CD8-positive, alpha-beta T cell (primary cell): ENCODE measurements at regions of chr16 and their contacts with region 1.

Region 1: DNA sequence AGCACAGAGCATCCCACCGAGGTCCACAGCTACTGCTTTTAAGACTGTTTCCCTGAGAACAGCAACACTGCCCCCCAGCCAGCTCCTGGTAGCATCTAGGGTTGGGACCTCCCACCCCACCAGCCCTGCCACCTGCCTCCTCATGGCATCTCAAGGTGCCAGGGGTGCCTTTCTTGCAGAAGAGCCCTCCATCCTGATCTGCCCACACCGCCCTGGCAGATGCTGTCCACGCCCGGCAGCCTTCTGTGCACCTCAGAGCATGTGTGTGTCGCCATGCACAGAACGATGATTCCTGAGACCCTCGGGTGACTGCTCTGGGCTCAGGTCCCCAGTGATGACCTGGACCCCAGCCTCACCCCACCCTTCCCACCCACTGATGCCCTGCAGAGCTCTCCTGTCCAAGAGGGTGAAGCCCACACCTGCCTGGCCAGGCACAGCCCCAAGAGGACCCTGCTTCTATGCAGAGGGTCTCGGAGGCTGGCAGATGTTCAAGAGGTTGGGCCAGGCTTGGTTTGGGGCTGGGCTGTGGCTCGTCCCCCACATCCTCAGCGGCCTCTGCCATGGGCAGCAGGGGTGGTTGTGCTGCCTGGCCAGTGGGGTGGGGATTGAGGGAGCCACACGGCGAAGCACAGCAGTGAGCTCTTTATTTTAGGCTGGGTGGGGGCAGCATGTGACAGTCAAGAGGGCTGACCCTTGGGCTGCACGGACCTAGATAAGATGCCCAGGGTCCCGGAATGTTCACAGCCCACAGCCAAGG is 5.2 kb upstream of the SPATA2L start:
- DNase-seq: peak in 1 of 9 experiments; percentile 20
- ATAC-seq: no peak
- H3K4me3 ChIP-seq: no peak overlapping the region
- H3K4me3 Mint-ChIP-seq: no peak overlapping the region
- H3K27ac ChIP-seq: no peak overlapping the region
- H3K27ac Mint-ChIP-seq: no peak overlapping the region
- H3K4me1 ChIP-seq: peaks cover 16% of the 10 kb centered on the region
- H3K4me1 Mint-ChIP-seq: peaks cover 12% of the 10 kb centered on the region
- H3K27me3 ChIP-seq: no peaks in the 10 kb centered on the region
- H3K27me3 Mint-ChIP-seq: no peaks in the 10 kb centered on the region
- CTCF ChIP-seq: no peak

Region 2: DNA sequence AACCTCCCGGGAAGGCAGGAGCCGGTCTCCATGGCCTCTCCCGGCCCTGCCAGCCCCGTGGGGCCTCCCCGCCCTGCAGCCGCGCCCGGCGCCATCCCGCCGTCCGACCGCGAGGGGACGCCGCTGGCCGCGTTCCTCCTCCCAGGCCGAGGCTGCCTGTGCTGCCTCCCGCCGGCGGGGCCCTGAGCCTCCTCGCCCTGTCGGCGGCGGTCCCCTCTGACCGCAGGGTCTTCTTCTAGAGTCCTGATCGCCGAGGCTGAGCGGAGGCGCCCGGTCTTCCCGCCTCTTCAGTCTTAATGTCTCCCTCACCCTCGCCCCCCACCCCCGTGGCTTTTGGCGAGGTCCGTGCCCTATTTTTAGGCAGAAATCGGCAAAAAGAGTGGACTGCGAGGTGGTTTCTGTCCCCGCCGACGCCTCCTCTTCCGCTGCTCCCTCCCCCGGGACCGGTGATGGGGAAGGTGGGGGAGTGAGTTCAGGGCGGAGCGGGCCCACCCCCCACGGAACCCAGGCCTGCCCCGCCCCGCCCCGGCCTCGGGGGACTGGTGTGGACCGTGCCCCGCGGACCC is 131.9 kb before region 1 on chr16:
- CTCF ChIA-PET with region 1: no interaction called
- POLR2A ChIA-PET with region 1: no interaction called
- intact Hi-C with region 1: no loop called
- DNase-seq: peak in 7 of 9 experiments; percentile 40 to 71 (median 57)
- ATAC-seq: peak; percentile 53
- H3K4me3 ChIP-seq: peak overlapping the region; percentile 30 to 35
- H3K4me3 Mint-ChIP-seq: peak overlapping the region; percentile 53
- H3K27ac ChIP-seq: no peak overlapping the region
- H3K27ac Mint-ChIP-seq: no peak overlapping the region
- H3K4me1 ChIP-seq: peaks cover 25% of the 10 kb centered on the region
- H3K4me1 Mint-ChIP-seq: peaks cover 16% of the 10 kb centered on the region
- H3K27me3 ChIP-seq: peaks cover 10 to 14% of the 10 kb centered on the region in 2 experiments
- H3K27me3 Mint-ChIP-seq: peaks cover 19% of the 10 kb centered on the region
- CTCF ChIP-seq: no peak

Region 3: GRCh38 chr16:89629827-89630610 is 76.7 kb before region 1 on chr16:
- CTCF ChIA-PET with region 1: no interaction called
- POLR2A ChIA-PET with region 1: no interaction called
- intact Hi-C with region 1: no loop called
- DNase-seq: no peak
- ATAC-seq: no peak
- H3K4me3 ChIP-seq: no peak overlapping the region
- H3K4me3 Mint-ChIP-seq: no peak overlapping the region
- H3K27ac ChIP-seq: no peak overlapping the region
- H3K27ac Mint-ChIP-seq: no peak overlapping the region
- H3K4me1 ChIP-seq: no peaks in the 10 kb centered on the region
- H3K4me1 Mint-ChIP-seq: no peaks in the 10 kb centered on the region
- H3K27me3 ChIP-seq: no peaks in the 10 kb centered on the region
- H3K27me3 Mint-ChIP-seq: peaks cover 5% of the 10 kb centered on the region
- CTCF ChIP-seq: no peak

Region 4: GRCh38 chr16:89641458-89642119 is 65.1 kb before region 1 on chr16:
- CTCF ChIA-PET with region 1: no interaction called
- POLR2A ChIA-PET with region 1: no interaction called
- intact Hi-C with region 1: no loop called
- DNase-seq: no peak
- ATAC-seq: no peak
- H3K4me3 ChIP-seq: no peak overlapping the region
- H3K4me3 Mint-ChIP-seq: peak overlapping the region; percentile 70
- H3K27ac ChIP-seq: no peak overlapping the region
- H3K27ac Mint-ChIP-seq: no peak overlapping the region
- H3K4me1 ChIP-seq: peaks cover 9% of the 10 kb centered on the region
- H3K4me1 Mint-ChIP-seq: peaks cover 8% of the 10 kb centered on the region
- H3K27me3 ChIP-seq: peaks cover 0 to 2% of the 10 kb centered on the region in 2 experiments
- H3K27me3 Mint-ChIP-seq: no peaks in the 10 kb centered on the region
- CTCF ChIP-seq: no peak

Region 5: GRCh38 chr16:89737341-89738071 is 30.8 kb after region 1 on chr16:
- CTCF ChIA-PET with region 1: interaction called, 10 read pairs
- POLR2A ChIA-PET with region 1: interaction called, 7 read pairs
- intact Hi-C with region 1: loop called (anchors 2 to 5 kb)
- DNase-seq: peak in 6 of 9 experiments; percentile 19 to 85 (median 65)
- ATAC-seq: peak; percentile 73
- H3K4me3 ChIP-seq: no peak overlapping the region
- H3K4me3 Mint-ChIP-seq: peak overlapping the region; percentile 43
- H3K27ac ChIP-seq: peak overlapping the region in 1 of 2 experiments; percentile 6
- H3K27ac Mint-ChIP-seq: peak overlapping the region; percentile 82
- H3K4me1 ChIP-seq: peaks cover 54% of the 10 kb centered on the region
- H3K4me1 Mint-ChIP-seq: peaks cover 48% of the 10 kb centered on the region
- H3K27me3 ChIP-seq: no peaks in the 10 kb centered on the region
- H3K27me3 Mint-ChIP-seq: no peaks in the 10 kb centered on the region
- CTCF ChIP-seq: no peak

Region 6: DNA sequence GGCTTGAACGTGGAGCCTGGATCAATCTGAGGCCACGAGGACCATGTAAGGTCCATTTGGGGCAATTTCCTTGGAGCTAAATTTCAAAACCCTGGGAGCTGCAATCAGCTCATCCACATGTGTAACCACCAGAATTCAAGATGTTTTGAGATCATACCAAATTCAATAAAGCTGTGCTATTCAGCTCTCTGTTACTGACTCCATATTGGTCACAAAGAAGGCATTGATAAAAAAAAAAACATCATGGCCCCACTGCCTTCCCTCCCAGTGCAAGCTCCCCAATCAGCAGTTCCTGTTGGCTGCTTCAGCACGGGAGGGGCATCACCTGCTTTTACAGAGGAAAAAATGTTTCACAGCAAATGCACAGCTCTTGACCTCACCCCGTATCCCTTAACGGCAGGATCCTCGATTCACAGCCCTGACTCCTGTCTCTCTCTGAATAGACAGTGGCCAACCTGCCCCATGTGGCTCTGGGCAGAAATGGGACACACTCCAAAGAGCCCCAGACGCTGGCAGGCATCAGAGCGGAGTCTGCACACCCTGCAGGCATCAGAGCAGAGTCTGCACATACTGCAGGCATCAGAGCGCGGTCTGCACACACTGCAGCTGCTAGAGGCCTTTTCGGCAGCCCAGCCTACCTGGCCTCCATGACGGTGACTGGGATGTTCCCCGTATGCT is 72.7 kb after region 1 on chr16:
- CTCF ChIA-PET with region 1: interaction called, 10 read pairs
- POLR2A ChIA-PET with region 1: no interaction called
- intact Hi-C with region 1: no loop called
- DNase-seq: no peak
- ATAC-seq: no peak
- H3K4me3 ChIP-seq: no peak overlapping the region
- H3K4me3 Mint-ChIP-seq: no peak overlapping the region
- H3K27ac ChIP-seq: no peak overlapping the region
- H3K27ac Mint-ChIP-seq: no peak overlapping the region
- H3K4me1 ChIP-seq: peaks cover 7% of the 10 kb centered on the region
- H3K4me1 Mint-ChIP-seq: peaks cover 8% of the 10 kb centered on the region
- H3K27me3 ChIP-seq: no peaks in the 10 kb centered on the region
- H3K27me3 Mint-ChIP-seq: no peaks in the 10 kb centered on the region
- CTCF ChIP-seq: no peak

Region 7: DNA sequence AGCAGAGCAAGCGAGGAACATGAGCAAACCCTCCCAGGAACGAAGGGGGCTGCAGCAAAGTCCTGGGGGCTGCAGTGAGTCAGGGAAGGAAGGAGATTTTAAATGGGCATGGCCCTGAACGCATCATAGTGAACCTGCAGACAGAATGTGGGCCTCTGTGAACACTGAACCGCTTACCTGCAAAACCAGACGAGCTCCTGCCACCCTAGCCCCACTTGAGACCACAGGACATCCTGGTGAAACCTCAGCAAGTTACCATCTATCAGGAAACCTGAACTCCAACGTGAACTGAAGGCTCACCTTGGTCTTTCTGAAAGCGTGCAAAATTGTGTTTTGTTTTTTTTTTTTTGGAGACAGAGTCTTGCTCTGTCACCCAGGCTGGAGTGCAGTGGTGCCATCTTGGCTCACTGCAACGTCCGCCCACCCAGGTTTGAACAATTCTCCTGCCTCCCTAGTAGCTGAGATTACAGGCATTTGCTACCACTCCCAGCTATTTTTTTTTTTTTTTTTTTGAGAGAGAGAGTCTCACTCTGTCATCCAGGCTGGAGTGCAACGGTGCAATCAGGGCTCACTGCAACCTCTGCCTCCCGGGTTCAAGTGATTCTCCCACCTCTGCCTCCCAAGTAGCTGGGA is 79.0 kb after region 1 on chr16:
- CTCF ChIA-PET with region 1: interaction called, 352 read pairs
- POLR2A ChIA-PET with region 1: interaction called, 4 read pairs
- intact Hi-C with region 1: no loop called
- DNase-seq: peak; percentile 22 to 85 (median 65)
- ATAC-seq: peak; percentile 68
- H3K4me3 ChIP-seq: no peak overlapping the region
- H3K4me3 Mint-ChIP-seq: peak overlapping the region; percentile 57
- H3K27ac ChIP-seq: peak overlapping the region in 1 of 2 experiments; percentile 15
- H3K27ac Mint-ChIP-seq: peak overlapping the region; percentile 91
- H3K4me1 ChIP-seq: peaks cover 34% of the 10 kb centered on the region
- H3K4me1 Mint-ChIP-seq: peaks cover 30% of the 10 kb centered on the region
- H3K27me3 ChIP-seq: no peaks in the 10 kb centered on the region
- H3K27me3 Mint-ChIP-seq: no peaks in the 10 kb centered on the region
- CTCF ChIP-seq: no peak

Region 8: DNA sequence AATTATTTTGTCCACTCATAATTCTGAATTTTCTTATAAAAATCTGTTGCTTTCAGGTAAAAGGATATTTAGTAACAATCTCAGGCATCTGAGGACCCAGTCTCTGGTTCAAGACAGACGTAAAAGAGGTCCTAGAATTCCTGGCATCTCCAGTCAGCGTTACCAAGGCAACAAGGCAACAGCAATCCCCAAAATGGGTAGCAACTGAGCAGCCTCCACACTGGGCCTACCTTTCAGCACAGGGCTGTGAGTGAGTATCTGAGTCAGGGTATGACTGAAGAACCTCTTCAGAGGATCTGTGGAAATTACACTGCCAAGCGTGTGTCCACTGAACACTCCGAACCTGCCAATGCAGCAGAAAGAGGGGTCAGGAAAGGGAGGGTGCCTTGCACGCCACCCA is 89.0 kb after region 1 on chr16:
- CTCF ChIA-PET with region 1: interaction called, 352 read pairs
- POLR2A ChIA-PET with region 1: interaction called, 5 read pairs
- intact Hi-C with region 1: loop called (anchors 1 kb)
- DNase-seq: no peak
- ATAC-seq: no peak
- H3K4me3 ChIP-seq: no peak overlapping the region
- H3K4me3 Mint-ChIP-seq: no peak overlapping the region
- H3K27ac ChIP-seq: no peak overlapping the region
- H3K27ac Mint-ChIP-seq: no peak overlapping the region
- H3K4me1 ChIP-seq: no peaks in the 10 kb centered on the region
- H3K4me1 Mint-ChIP-seq: peaks cover 13% of the 10 kb centered on the region
- H3K27me3 ChIP-seq: no peaks in the 10 kb centered on the region
- H3K27me3 Mint-ChIP-seq: no peaks in the 10 kb centered on the region
- CTCF ChIP-seq: no peak

Region 9: DNA sequence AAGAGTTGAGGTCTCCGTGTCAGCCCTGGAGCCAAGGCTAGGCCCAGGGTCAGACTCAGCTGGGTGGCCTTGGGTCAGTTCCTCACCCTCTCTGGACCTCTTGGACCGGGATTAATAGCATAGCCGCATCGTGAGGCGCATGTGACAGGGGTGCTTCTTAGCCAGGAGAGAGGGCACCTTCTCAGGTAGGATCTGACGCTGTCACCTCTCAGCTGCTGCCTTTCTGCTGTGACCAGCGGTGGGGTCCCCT is 130.5 kb after region 1 on chr16:
- CTCF ChIA-PET with region 1: interaction called, 10 read pairs
- POLR2A ChIA-PET with region 1: no interaction called
- intact Hi-C with region 1: no loop called
- DNase-seq: no peak
- ATAC-seq: no peak
- H3K4me3 ChIP-seq: peak overlapping the region; percentile 21 to 28
- H3K4me3 Mint-ChIP-seq: peak overlapping the region; percentile 68
- H3K27ac ChIP-seq: no peak overlapping the region
- H3K27ac Mint-ChIP-seq: no peak overlapping the region
- H3K4me1 ChIP-seq: peaks cover 30% of the 10 kb centered on the region
- H3K4me1 Mint-ChIP-seq: peaks cover 26% of the 10 kb centered on the region
- H3K27me3 ChIP-seq: no peaks in the 10 kb centered on the region
- H3K27me3 Mint-ChIP-seq: peaks cover 4% of the 10 kb centered on the region
- CTCF ChIP-seq: no peak

Region 10: GRCh38 chr16:89909777-89910716 is 203.4 kb after region 1 on chr16:
- CTCF ChIA-PET with region 1: interaction called, 22 read pairs
- POLR2A ChIA-PET with region 1: no interaction called
- intact Hi-C with region 1: loop called in 1 of 2 experiments (anchors 1 kb)
- DNase-seq: peak; percentile 43 to 80 (median 72)
- ATAC-seq: peak; percentile 83
- H3K4me3 ChIP-seq: no peak overlapping the region
- H3K4me3 Mint-ChIP-seq: no peak overlapping the region
- H3K27ac ChIP-seq: no peak overlapping the region
- H3K27ac Mint-ChIP-seq: no peak overlapping the region
- H3K4me1 ChIP-seq: peaks cover 4% of the 10 kb centered on the region
- H3K4me1 Mint-ChIP-seq: peaks cover 5% of the 10 kb centered on the region
- H3K27me3 ChIP-seq: no peaks in the 10 kb centered on the region
- H3K27me3 Mint-ChIP-seq: no peaks in the 10 kb centered on the region
- CTCF ChIP-seq: peak; percentile 77